T-cell (primary cell): ENCODE measurements at regions of chr10 and their contacts with region 1.

Region 1: DNA sequence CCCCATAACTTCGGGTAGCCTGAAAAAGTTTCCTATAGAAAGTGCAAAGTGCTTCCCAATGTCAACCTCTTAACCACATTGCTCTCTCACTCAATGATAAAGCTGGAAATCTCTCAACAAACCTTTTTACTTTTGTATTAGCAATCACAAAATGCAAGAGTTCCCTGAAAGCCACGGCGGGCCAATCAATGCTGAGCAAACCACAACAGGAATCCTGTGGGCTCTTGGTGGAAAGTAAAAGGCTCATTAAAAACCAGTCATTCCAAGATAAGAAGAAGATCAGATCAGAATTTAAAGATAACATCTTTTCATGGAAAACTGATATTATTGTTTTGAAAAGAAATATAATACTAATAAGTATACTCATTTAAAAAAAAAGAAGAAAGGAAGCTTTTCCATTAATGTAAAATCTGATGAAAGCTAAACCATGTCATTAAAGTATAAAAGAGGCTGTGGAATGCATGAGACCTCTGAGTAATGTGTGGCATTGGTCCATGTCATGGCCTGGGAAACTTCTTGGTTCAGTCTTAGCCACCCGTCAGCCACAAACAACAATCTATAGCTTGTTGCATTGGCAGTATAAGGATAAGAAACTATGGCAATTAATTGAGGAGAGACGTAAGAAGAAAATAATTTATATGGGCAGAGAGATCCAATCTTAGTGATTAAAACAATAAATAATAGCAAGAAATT is 1066.1 kb upstream of the SORCS1 start:
- DNase-seq: no peak
- ATAC-seq: no peak
- H3K4me3 ChIP-seq: no peak overlapping the region
- H3K4me3 Mint-ChIP-seq: no peak overlapping the region
- H3K27ac ChIP-seq: no peak overlapping the region
- H3K27ac Mint-ChIP-seq: no peak overlapping the region
- H3K4me1 ChIP-seq: no peaks in the 10 kb centered on the region
- H3K4me1 Mint-ChIP-seq: no peaks in the 10 kb centered on the region
- H3K27me3 ChIP-seq: no peaks in the 10 kb centered on the region
- H3K27me3 Mint-ChIP-seq: no peaks in the 10 kb centered on the region

Region 2: GRCh38 chr10:108260383-108260906 is 29.8 kb after region 1 on chr10:
- CTCF ChIA-PET with region 1: interaction called in 1 of 2 experiments, 15 read pairs
- POLR2A ChIA-PET with region 1: no interaction called
- DNase-seq: no peak
- ATAC-seq: no peak
- H3K4me3 ChIP-seq: no peak overlapping the region
- H3K4me3 Mint-ChIP-seq: no peak overlapping the region
- H3K27ac ChIP-seq: no peak overlapping the region
- H3K27ac Mint-ChIP-seq: no peak overlapping the region
- H3K4me1 ChIP-seq: no peaks in the 10 kb centered on the region
- H3K4me1 Mint-ChIP-seq: no peaks in the 10 kb centered on the region
- H3K27me3 ChIP-seq: no peaks in the 10 kb centered on the region
- H3K27me3 Mint-ChIP-seq: no peaks in the 10 kb centered on the region